ENCODE measurements at regions of chr21 and their contacts with region 1.

Region 1: DNA sequence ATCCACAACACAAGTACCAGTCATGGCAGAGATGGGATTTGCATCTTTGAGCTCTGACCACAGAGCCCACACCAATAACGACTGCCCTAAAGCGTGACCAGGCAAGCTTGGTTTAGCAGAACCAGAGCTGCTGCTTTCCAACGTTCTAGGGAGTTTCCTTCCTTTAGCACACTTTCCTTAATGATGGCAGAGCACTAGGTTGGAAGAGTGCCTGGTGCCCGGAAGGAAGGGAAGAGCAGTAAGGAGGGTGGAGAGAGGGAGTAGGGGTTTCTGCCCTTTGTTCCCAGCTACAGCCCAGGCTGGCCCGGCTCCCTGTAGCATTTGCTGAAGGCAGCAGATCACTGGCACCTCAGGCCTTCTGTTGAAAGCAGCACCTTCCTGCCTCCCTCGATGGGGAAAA is 6.1 kb upstream of the EVA1C start:
- DNase-seq: no peak
- ATAC-seq: no peak
- H3K4me3 ChIP-seq: no peak overlapping the region
- H3K27ac ChIP-seq: no peak overlapping the region
- H3K4me1 ChIP-seq: peaks cover 11% of the 10 kb centered on the region
- H3K27me3 ChIP-seq: no peaks in the 10 kb centered on the region
- CTCF ChIP-seq: no peak
- POLR2A ChIP-seq: no peak

Region 2: DNA sequence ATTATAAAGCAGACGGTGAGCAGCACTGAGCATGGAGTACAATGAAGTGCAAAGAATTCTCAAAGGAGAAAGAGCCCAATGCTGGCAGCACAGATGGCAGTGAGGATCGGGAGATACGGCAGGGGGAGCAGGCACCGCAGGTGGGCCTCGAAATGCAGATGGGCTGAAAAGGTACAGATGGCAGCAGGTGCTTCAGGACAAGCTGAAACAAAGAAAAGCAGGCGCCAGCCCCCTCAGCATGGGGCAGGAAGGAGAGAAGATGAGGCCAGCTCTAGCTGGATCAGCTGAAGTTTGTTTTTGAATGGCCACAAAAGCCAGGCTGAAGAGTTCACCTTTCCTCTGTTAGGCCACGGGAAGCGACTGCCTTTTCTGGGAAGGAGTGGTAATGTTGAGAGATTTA is 198.1 kb after region 1 on chr21:
- intact Hi-C with region 1: loop called (anchors 5 kb)
- DNase-seq: no peak
- ATAC-seq: no peak
- H3K4me3 ChIP-seq: no peak overlapping the region
- H3K27ac ChIP-seq: no peak overlapping the region
- H3K4me1 ChIP-seq: no peaks in the 10 kb centered on the region
- H3K27me3 ChIP-seq: no peaks in the 10 kb centered on the region
- CTCF ChIP-seq: no peak
- POLR2A ChIP-seq: no peak

Measured in body of pancreas (tissue), 4 donors.